ENCODE measurements at regions of chr12 and their contacts with region 1.

Region 1: DNA sequence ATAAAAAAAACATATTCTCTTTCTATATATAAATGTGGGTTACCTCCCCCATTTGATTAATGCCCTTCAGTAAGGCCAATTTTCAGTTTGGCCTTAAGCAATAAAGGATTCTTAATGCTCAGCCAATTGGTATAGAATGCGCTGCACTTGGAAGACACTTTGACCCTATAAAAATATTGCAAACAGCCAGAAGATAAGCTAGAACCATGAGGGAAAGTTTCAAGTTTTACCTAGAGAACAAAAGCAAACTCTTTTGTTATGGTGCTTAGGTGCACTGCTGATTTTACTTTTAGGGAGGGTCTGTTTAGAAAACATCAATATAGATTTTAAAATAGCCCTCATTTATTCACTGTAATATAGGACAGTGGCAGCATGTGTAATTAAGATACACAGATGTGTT is 251.6 kb upstream of the SLC16A7 start:
- DNase-seq: no peak
- H3K4me3 ChIP-seq: no peak overlapping the region
- H3K27ac ChIP-seq: no peak overlapping the region; the same call in 1 of the 2 replicates
- H3K4me1 ChIP-seq: no peaks in the 10 kb centered on the region; a peak in 1 of 7 replicates
- H3K27me3 ChIP-seq: no peaks in the 10 kb centered on the region
- CTCF ChIP-seq: no peak
- EP300 ChIP-seq: no peak
- POLR2A ChIP-seq: no peak
- RAD21 ChIP-seq: no peak

Region 2: GRCh38 chr12:59268295-59268809 is 75.9 kb before region 1 on chr12:
- CTCF ChIA-PET with region 1: no interaction called
- POLR2A ChIA-PET with region 1: no interaction called
- DNase-seq: no peak
- H3K4me3 ChIP-seq: no peak overlapping the region
- H3K27ac ChIP-seq: no peak overlapping the region
- H3K4me1 ChIP-seq: no peaks in the 10 kb centered on the region
- H3K27me3 ChIP-seq: no peaks in the 10 kb centered on the region
- CTCF ChIP-seq: no peak
- EP300 ChIP-seq: no peak
- POLR2A ChIP-seq: no peak
- RAD21 ChIP-seq: no peak

Region 3: DNA sequence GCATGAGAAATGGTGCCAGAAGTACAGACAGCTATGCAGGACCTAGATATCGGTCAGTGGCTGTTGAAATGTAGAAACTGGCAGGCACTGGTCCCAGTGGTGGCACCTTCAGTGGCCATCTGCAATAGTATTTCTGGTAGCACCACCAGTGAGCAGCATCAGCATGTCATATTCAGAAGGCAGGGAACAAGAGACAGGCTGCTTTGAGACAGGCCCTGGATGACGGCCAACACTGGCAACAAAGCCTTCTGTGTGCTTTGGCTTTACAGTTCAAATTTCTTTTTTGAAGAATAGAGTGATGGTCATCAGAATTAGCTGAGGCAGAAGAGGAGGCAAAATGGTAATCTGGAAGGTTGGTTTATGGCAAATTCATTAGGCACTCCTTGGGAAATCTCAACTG is 21.8 kb before region 1 on chr12:
- CTCF ChIA-PET with region 1: interaction called, 3 read pairs
- POLR2A ChIA-PET with region 1: interaction called, 17 read pairs
- DNase-seq: no peak
- H3K4me3 ChIP-seq: peak overlapping the region in 2 of 4 experiments; percentile 8 to 33; a peak in 2 of 8 replicates
- H3K27ac ChIP-seq: no peak overlapping the region
- H3K4me1 ChIP-seq: peaks cover 2 to 9% (median 6%) of the 10 kb centered on the region in 4 experiments; a peak in 5 of 7 replicates
- H3K27me3 ChIP-seq: no peaks in the 10 kb centered on the region
- CTCF ChIP-seq: no peak
- EP300 ChIP-seq: no peak
- POLR2A ChIP-seq: peak; percentile 51 to 59; a peak in 2 of 3 replicates
- RAD21 ChIP-seq: no peak

Region 4: GRCh38 chr12:59329457-59329856 is 14.8 kb before region 1 on chr12:
- CTCF ChIA-PET with region 1: interaction called, 15 read pairs
- POLR2A ChIA-PET with region 1: interaction called, 3 read pairs
- DNase-seq: no peak
- H3K4me3 ChIP-seq: peak overlapping the region in 1 of 4 experiments; percentile 76; a peak in 1 of 8 replicates
- H3K27ac ChIP-seq: peak overlapping the region; percentile 52; the same call in 1 of the 2 replicates
- H3K4me1 ChIP-seq: peaks cover 0 to 15% (median 5%) of the 10 kb centered on the region in 4 experiments; a peak in 4 of 7 replicates
- H3K27me3 ChIP-seq: no peaks in the 10 kb centered on the region
- CTCF ChIP-seq: no peak
- EP300 ChIP-seq: no peak
- POLR2A ChIP-seq: no peak
- RAD21 ChIP-seq: no peak

Region 5: GRCh38 chr12:59383056-59383822 is 39.0 kb after region 1 on chr12:
- CTCF ChIA-PET with region 1: no interaction called
- POLR2A ChIA-PET with region 1: no interaction called
- DNase-seq: no peak
- H3K4me3 ChIP-seq: no peak overlapping the region
- H3K27ac ChIP-seq: no peak overlapping the region
- H3K4me1 ChIP-seq: peaks cover 0 to 5% (median 1%) of the 10 kb centered on the region in 4 experiments; a peak in 2 of 7 replicates
- H3K27me3 ChIP-seq: no peaks in the 10 kb centered on the region
- CTCF ChIP-seq: no peak
- EP300 ChIP-seq: no peak
- POLR2A ChIP-seq: no peak
- RAD21 ChIP-seq: no peak

Region 6: GRCh38 chr12:59559696-59560095 is 215.5 kb after region 1 on chr12:
- CTCF ChIA-PET with region 1: no interaction called
- POLR2A ChIA-PET with region 1: no interaction called
- DNase-seq: no peak
- H3K4me3 ChIP-seq: no peak overlapping the region
- H3K27ac ChIP-seq: no peak overlapping the region
- H3K4me1 ChIP-seq: no peaks in the 10 kb centered on the region
- H3K27me3 ChIP-seq: no peaks in the 10 kb centered on the region
- CTCF ChIP-seq: no peak
- EP300 ChIP-seq: no peak
- POLR2A ChIP-seq: no peak
- RAD21 ChIP-seq: no peak